Activated CD4-positive, alpha-beta T cell treated with anti-CD3 and anti-CD28 coated beads for 36 hours (primary cell): ENCODE measurements at regions of chr19 and their contacts with region 1.

Region 1: DNA sequence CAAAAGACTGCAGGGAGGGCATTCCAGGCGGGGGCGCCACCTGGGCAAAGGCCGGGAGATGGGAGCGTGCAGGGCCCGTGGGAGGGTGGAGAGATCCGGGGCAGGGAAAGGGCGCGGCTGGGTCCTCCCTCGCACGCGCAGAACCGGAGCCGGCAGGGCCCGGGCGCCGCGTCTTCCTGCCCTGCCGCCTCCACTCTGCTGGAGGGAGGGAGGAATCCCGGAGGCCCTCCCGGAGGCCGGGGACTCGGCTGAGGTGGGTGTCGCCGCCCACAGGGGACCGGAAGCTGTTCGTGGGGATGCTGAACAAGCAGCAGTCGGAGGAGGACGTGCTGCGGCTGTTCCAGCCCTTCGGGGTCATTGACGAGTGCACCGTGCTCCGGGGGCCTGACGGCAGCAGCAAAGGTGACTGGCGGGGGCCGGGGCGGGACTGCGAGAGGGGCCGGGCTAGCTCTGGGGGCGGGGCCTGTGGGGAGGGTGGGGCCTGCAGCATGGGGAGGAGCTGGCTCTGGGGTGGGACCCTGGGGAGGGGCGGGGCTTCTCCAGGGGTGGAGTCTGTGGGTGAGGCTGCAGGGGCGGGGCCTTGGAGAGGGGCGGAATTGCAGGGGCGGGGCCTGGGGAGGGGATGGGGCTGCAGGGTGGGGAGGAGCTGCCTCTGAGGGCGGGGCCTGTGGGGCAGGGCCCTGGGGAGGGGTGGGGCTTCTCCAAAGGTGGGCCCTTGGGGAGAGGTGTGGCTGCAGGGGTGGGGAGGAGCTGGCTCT is 51.3 kb downstream of the CELF5 start:
- DNase-seq: peak; percentile 99
- ATAC-seq: peak; percentile 83
- H3K4me3 Mint-ChIP-seq: peak overlapping the region; percentile 73
- H3K27ac Mint-ChIP-seq: peak overlapping the region; percentile 80
- H3K4me1 Mint-ChIP-seq: peaks cover 8% of the 10 kb centered on the region
- H3K27me3 Mint-ChIP-seq: peaks cover 9% of the 10 kb centered on the region

Region 2: DNA sequence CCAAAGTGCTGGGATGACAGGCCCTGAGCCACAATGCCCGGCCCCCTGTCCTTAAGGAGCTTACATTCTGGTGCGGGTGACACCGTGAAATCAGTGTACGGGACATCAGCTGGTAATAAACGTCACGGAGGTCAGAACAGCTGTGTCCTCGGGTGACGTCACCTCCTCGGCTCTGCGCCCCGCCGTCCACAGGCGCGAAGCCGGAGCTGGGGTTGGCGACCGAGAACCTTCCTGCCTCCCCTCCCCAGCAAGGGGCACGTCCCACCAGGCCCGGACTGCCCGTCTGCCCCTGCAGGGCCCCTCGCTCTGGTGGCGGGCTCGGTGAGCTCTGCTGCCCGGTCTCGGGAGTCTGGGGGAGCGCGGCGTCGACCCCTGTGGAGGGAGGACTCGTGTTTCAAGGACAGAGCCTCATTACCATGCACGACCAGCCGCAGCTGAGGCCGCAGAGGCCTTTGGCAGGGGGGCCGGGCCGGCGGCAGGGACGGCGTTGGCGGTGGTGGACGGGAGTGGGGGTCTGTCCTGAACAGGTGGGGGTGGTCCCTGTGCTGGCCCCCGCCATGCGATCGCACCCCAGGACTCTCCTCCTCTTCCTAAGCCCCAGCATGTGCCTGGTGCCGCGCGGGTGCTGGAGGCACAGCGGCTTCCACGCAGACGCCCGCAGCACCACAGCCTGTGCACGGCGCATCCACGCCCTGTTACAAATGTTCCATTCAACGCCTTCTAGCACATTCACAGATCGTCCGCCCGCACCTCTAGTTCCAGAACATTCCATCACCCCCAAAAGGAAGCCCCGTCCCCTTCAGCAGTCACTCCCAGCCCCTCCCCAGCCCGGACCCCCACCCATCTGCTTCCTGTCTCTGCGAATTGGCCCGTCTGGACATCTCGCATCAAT is 973.2 kb before region 1 on chr19:
- CTCF ChIA-PET with region 1: no interaction called
- POLR2A ChIA-PET with region 1: no interaction called
- intact Hi-C with region 1: no loop called
- DNase-seq: no peak
- ATAC-seq: no peak
- H3K4me3 Mint-ChIP-seq: no peak overlapping the region
- H3K27ac Mint-ChIP-seq: no peak overlapping the region
- H3K4me1 Mint-ChIP-seq: peaks cover 5% of the 10 kb centered on the region
- H3K27me3 Mint-ChIP-seq: peaks cover 28% of the 10 kb centered on the region

Region 3: GRCh38 chr19:2977001-2977685 is 298.6 kb before region 1 on chr19 and contains the start of gene TLE6:
- CTCF ChIA-PET with region 1: no interaction called
- POLR2A ChIA-PET with region 1: no interaction called
- intact Hi-C with region 1: loop called in 1 of 2 experiments (anchors 1 kb)
- DNase-seq: peak; percentile 98
- ATAC-seq: peak; percentile 100
- H3K4me3 Mint-ChIP-seq: peak within 1 kb of the TSS; percentile 77
- H3K27ac Mint-ChIP-seq: peak within 1 kb of the TSS; percentile 63
- H3K4me1 Mint-ChIP-seq: peaks cover 14% of the 10 kb centered on the region
- H3K27me3 Mint-ChIP-seq: peaks cover 4% of the 10 kb centered on the region
- total RNA-seq, gene TLE6: 2.6 to 3.5 TPM

Region 4: GRCh38 chr19:3116255-3116602 is 159.5 kb before region 1 on chr19:
- CTCF ChIA-PET with region 1: no interaction called
- POLR2A ChIA-PET with region 1: no interaction called
- intact Hi-C with region 1: no loop called
- DNase-seq: no peak
- ATAC-seq: no peak
- H3K4me3 Mint-ChIP-seq: no peak overlapping the region
- H3K27ac Mint-ChIP-seq: no peak overlapping the region
- H3K4me1 Mint-ChIP-seq: no peaks in the 10 kb centered on the region
- H3K27me3 Mint-ChIP-seq: no peaks in the 10 kb centered on the region

Region 5: GRCh38 chr19:3304871-3305423 is 29.2 kb after region 1 on chr19:
- CTCF ChIA-PET with region 1: interaction called, 11 read pairs
- POLR2A ChIA-PET with region 1: no interaction called
- intact Hi-C with region 1: no loop called
- DNase-seq: peak; percentile 89
- ATAC-seq: peak; percentile 63
- H3K4me3 Mint-ChIP-seq: no peak overlapping the region
- H3K27ac Mint-ChIP-seq: no peak overlapping the region
- H3K4me1 Mint-ChIP-seq: no peaks in the 10 kb centered on the region
- H3K27me3 Mint-ChIP-seq: peaks cover 11% of the 10 kb centered on the region

Region 6: GRCh38 chr19:3479177-3479833 is 203.5 kb after region 1 on chr19:
- CTCF ChIA-PET with region 1: no interaction called
- POLR2A ChIA-PET with region 1: interaction called, 3 read pairs
- intact Hi-C with region 1: loop called in 1 of 2 experiments (anchors 1 kb)
- DNase-seq: peak; percentile 68
- ATAC-seq: peak; percentile 77
- H3K4me3 Mint-ChIP-seq: no peak overlapping the region
- H3K27ac Mint-ChIP-seq: no peak overlapping the region
- H3K4me1 Mint-ChIP-seq: peaks cover 9% of the 10 kb centered on the region
- H3K27me3 Mint-ChIP-seq: no peaks in the 10 kb centered on the region